Posterior vena cava (tissue), 2 donors: ENCODE measurements at regions of chr6 and their contacts with region 1.

Region 1: DNA sequence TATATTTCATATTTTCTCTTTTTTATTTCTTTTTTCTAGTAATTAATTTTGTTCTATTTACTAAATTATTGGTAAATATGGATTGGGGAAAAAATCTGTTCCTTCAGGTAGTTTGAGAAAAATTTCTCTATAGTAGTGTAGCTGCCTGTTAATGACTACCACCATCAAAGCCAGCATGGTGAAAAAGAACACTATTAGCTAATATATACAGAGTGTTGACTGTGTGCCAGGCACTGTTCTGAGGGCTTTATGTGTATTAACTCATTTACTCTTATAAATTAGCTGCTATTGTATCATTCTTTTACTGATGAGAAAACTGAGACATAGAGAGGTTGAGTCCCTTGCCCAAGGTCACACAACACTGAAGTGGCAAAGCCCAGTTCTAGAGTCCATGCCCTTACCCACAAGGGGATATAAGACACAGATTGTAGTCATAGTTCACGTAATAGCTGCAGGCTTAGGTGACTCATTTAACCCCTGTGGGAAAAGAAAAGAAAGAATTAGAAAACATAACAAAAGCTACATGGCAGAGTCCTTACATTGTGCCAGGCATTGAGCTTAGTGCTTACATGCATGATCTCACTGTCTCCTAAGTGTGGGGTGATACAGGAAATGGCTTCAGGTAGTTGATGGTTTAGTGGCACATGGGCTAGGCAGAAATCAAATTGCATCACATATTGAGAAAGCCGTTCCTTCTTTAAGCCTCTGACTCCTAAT is 12.2 kb upstream of the AKIRIN2 start:
- DNase-seq: no peak

Region 2: GRCh38 chr6:87154993-87155841 is 559.0 kb before region 1 on chr6 and contains the start of gene ZNF292:
- intact Hi-C with region 1: no loop called
- DNase-seq: peak; percentile 99
- total RNA-seq, gene ZNF292: 46.5 to 61.2 TPM

Region 3: DNA sequence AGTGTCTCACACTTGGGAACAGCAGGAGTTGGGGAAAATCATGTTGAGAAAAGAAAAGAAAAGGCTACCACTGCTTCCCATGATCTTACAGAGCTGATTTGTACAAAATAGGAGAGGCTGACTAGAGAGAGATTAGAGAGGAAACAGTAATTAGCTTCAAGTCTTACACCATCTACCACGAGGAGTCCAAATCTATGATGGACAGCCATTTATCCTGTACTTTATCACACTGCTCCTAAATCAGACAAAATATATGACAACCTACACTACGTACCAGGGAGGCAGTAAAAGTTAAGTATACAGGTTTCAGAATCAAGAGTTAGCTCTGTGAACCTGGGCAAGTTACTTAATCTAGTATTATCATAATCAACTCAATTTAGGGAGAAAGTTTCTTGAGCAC is 162.5 kb before region 1 on chr6:
- intact Hi-C with region 1: loop called in 1 of 2 experiments (anchors 2 kb)
- DNase-seq: no peak